Naive thymus-derived CD4-positive, alpha-beta T cell (primary cell): ENCODE measurements at regions of chr14 and their contacts with region 1.

Region 1: DNA sequence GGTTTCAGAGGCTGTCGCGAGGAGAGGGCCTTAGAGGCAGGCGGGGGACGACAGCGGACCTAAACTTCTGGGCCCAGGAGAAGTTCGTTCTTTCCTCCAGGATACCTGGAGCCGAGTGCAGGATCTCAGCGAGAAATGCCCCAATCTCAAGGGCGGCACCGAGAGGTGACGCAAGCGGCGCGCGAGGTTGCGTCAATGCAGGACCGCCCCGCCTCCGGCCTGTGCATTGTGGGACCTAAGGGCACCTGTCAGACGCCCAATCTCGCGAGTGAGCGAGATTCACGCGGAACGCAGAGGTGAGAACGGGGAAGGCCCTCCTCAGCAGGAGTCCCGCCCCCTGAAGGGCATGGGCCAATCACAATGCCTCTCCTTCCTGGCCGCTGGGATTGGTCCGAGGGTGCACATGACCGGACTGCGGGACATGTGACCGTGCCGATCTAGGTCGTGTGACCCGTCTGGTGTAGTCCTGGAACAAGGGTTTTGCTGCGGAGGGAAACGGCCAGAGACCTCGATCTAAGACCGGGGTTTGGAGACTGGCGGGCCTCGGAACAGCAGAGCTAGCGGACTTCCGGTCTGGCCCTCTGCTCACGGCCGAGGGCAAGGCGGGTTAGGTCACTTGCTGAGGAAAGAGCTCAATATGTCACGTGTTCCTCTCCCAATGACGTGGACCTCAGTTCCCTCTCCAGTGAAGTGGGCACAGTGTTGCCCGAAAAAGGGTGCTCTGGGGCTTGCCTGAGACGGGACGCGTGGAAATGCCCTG is 16.3 kb upstream of the DYNC1H1 start:
- DNase-seq: peak; percentile 95 to 100 (median 99)
- ATAC-seq: peak; percentile 97
- H3K4me3 ChIP-seq: peak overlapping the region; percentile 96
- H3K4me3 Mint-ChIP-seq: peak overlapping the region; percentile 86 to 99 (median 98)
- H3K27ac ChIP-seq: peak overlapping the region; percentile 99
- H3K27ac Mint-ChIP-seq: peak overlapping the region; percentile 97 to 100 (median 99)
- H3K4me1 ChIP-seq: peaks cover 9 to 10% of the 10 kb centered on the region in 2 donors
- H3K4me1 Mint-ChIP-seq: peaks cover 17 to 34% (median 25%) of the 10 kb centered on the region in 7 donors
- H3K27me3 ChIP-seq: no peaks in the 10 kb centered on the region
- H3K27me3 Mint-ChIP-seq: peaks cover 15 to 37% (median 30%) of the 10 kb centered on the region in 5 donors

Region 2: GRCh38 chr14:101731187-101732080 is 216.7 kb before region 1 on chr14:
- CTCF ChIA-PET with region 1: interaction called, 7 read pairs
- POLR2A ChIA-PET with region 1: interaction called, 3 read pairs
- intact Hi-C with region 1: loop called in 1 of 2 experiments (anchors 1 kb)
- DNase-seq: peak; percentile 37 to 90 (median 78)
- ATAC-seq: peak; percentile 96
- H3K4me3 ChIP-seq: peak overlapping the region; percentile 53
- H3K4me3 Mint-ChIP-seq: peak overlapping the region; percentile 79 to 95 (median 84)
- H3K27ac ChIP-seq: peak overlapping the region; percentile 82
- H3K27ac Mint-ChIP-seq: peak overlapping the region; percentile 93 to 99 (median 98)
- H3K4me1 ChIP-seq: peaks cover 26 to 36% of the 10 kb centered on the region in 2 donors
- H3K4me1 Mint-ChIP-seq: peaks cover 12 to 62% (median 47%) of the 10 kb centered on the region in 7 donors
- H3K27me3 ChIP-seq: no peaks in the 10 kb centered on the region
- H3K27me3 Mint-ChIP-seq: no peaks in the 10 kb centered on the region

Region 3: GRCh38 chr14:101858791-101859537 is 89.1 kb before region 1 on chr14:
- CTCF ChIA-PET with region 1: no interaction called
- POLR2A ChIA-PET with region 1: no interaction called
- intact Hi-C with region 1: no loop called
- DNase-seq: no peak
- ATAC-seq: peak; percentile 3
- H3K4me3 ChIP-seq: no peak overlapping the region
- H3K4me3 Mint-ChIP-seq: peak overlapping the region in 3 of 10 donors; percentile 2 to 67 (median 17)
- H3K27ac ChIP-seq: peak overlapping the region; percentile 11
- H3K27ac Mint-ChIP-seq: peak overlapping the region; percentile 16 to 88 (median 73)
- H3K4me1 ChIP-seq: peaks cover 11 to 41% of the 10 kb centered on the region in 2 donors
- H3K4me1 Mint-ChIP-seq: peaks cover 44 to 83% (median 72%) of the 10 kb centered on the region in 7 donors
- H3K27me3 ChIP-seq: no peaks in the 10 kb centered on the region
- H3K27me3 Mint-ChIP-seq: no peaks in the 10 kb centered on the region

Region 4: DNA sequence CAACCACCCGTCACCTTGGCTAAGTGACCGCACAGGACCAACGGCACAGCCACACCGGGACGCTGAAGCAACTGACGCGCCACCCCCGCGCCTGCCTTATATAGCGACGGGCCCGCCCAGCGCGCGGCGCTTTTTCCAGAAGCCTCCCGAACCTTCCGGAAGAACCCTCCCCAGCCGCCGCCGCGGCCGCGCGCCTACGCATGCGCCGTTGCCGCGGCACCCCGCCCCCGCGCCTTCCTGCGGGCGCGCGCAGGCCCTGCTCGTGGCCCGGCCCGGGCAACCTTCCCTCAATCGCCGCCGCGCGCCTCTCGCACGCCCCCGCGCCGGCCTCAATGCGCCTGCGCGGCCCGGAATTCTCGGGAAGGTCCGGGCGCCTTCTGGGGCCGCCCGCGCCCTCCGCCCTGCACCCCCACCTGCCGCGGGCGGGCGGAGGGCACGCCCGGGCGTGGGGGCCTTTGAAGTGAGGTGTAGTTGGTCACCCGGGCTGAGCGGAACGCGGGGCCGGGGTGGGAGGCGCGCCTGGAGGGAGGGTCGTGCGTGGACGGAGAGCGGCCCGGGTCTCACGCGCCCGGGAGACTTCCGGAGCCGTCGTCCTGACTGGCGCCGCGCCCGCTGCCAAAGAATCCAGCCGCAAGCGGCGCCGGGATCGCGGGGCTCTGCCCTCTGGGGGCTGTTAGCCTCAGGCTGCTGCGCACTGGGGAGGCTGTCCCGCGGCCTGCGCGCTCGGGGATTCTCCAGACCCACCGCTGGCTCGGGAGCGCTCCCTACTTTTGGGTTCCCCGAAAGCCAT is 139.1 kb after region 1 on chr14 and contains the start of gene HSP90AA1:
- CTCF ChIA-PET with region 1: no interaction called
- POLR2A ChIA-PET with region 1: interaction called, 5 read pairs
- intact Hi-C with region 1: loop called (anchors 1 kb)
- DNase-seq: peak; percentile 89 to 99 (median 94)
- ATAC-seq: peak; percentile 87
- H3K4me3 ChIP-seq: peak within 1 kb of the TSS; percentile 91
- H3K4me3 Mint-ChIP-seq: peak within 1 kb of the TSS; percentile 90 to 98 (median 96)
- H3K27ac ChIP-seq: peak within 1 kb of the TSS; percentile 98
- H3K27ac Mint-ChIP-seq: peak within 1 kb of the TSS; percentile 93 to 98 (median 96)
- H3K4me1 ChIP-seq: peaks cover 41 to 43% of the 10 kb centered on the region in 2 donors
- H3K4me1 Mint-ChIP-seq: peaks cover 44 to 70% (median 62%) of the 10 kb centered on the region in 7 donors
- H3K27me3 ChIP-seq: no peaks in the 10 kb centered on the region
- H3K27me3 Mint-ChIP-seq: no peaks in the 10 kb centered on the region
- total RNA-seq, gene HSP90AA1: 229 to 591 (median 361) TPM

Region 5: DNA sequence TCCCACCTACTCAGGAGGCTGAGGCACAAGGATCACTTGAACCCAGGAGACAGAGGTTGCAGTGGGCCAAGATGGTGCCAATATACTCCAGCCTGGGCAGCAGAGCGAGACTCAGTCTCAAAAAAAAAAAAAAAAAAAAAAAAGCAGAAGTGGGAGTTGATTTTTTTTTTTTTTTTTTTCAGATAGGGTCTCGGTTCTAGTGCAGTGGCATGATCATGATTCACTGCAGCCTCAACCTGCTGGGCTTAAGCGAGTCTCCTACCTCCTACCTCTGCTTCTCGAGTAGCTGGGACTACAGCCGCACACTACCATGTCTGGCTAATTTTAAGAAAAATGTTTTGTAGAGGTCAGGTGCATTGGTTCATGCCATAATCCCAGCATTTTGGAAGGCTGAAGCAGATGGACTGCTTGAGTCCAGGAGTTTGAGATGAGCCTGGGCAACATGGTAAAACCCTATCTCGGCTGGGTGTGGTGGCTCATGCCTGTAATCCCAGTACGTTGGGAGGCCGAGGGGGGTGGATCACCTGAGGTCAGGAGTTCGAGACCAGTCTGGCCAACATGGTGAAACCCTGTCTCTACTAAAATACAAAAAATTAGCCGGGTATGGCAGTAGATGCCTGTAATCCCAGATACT is 155.1 kb after region 1 on chr14:
- CTCF ChIA-PET with region 1: no interaction called
- POLR2A ChIA-PET with region 1: no interaction called
- intact Hi-C with region 1: no loop called
- DNase-seq: no peak
- ATAC-seq: no peak
- H3K4me3 ChIP-seq: no peak overlapping the region
- H3K4me3 Mint-ChIP-seq: no peak overlapping the region
- H3K27ac ChIP-seq: no peak overlapping the region
- H3K27ac Mint-ChIP-seq: no peak overlapping the region
- H3K4me1 ChIP-seq: no peaks in the 10 kb centered on the region
- H3K4me1 Mint-ChIP-seq: no peaks in the 10 kb centered on the region
- H3K27me3 ChIP-seq: no peaks in the 10 kb centered on the region
- H3K27me3 Mint-ChIP-seq: peaks cover 0 to 11% (median 0%) of the 10 kb centered on the region in 5 donors

Region 6: GRCh38 chr14:102304611-102305509 is 356.8 kb after region 1 on chr14 and contains the start of gene MOK:
- CTCF ChIA-PET with region 1: no interaction called
- POLR2A ChIA-PET with region 1: no interaction called
- intact Hi-C with region 1: loop called (anchors 1 kb)
- DNase-seq: peak; percentile 94 to 99 (median 98)
- ATAC-seq: peak; percentile 95
- H3K4me3 ChIP-seq: peak within 1 kb of the TSS; percentile 75
- H3K4me3 Mint-ChIP-seq: peak within 1 kb of the TSS; percentile 86 to 99 (median 96)
- H3K27ac ChIP-seq: peak within 1 kb of the TSS; percentile 81
- H3K27ac Mint-ChIP-seq: peak within 1 kb of the TSS; percentile 87 to 99 (median 95)
- H3K4me1 ChIP-seq: peaks cover 0 to 2% of the 10 kb centered on the region in 2 donors
- H3K4me1 Mint-ChIP-seq: peaks cover 0 to 16% (median 13%) of the 10 kb centered on the region in 7 donors
- H3K27me3 ChIP-seq: no peaks in the 10 kb centered on the region
- H3K27me3 Mint-ChIP-seq: peaks cover 0 to 16% (median 0%) of the 10 kb centered on the region in 5 donors
- total RNA-seq, gene MOK: 1.3 to 3.5 (median 1.9) TPM

Region 7: GRCh38 chr14:102928412-102929240 is 980.5 kb after region 1 on chr14:
- CTCF ChIA-PET with region 1: no interaction called
- POLR2A ChIA-PET with region 1: interaction called, 3 read pairs
- intact Hi-C with region 1: loop called in 1 of 2 experiments (anchors 5 kb)
- DNase-seq: peak; percentile 58 to 83 (median 78)
- ATAC-seq: peak; percentile 87
- H3K4me3 ChIP-seq: peak overlapping the region; percentile 56
- H3K4me3 Mint-ChIP-seq: peak overlapping the region; percentile 73 to 85 (median 78)
- H3K27ac ChIP-seq: no peak overlapping the region
- H3K27ac Mint-ChIP-seq: peak overlapping the region in 4 of 9 donors; percentile 39 to 79 (median 50)
- H3K4me1 ChIP-seq: peaks cover 11 to 27% of the 10 kb centered on the region in 2 donors
- H3K4me1 Mint-ChIP-seq: peaks cover 4 to 19% (median 6%) of the 10 kb centered on the region in 7 donors
- H3K27me3 ChIP-seq: no peaks in the 10 kb centered on the region
- H3K27me3 Mint-ChIP-seq: peaks cover 0 to 57% (median 11%) of the 10 kb centered on the region in 5 donors